ENCODE measurements at regions of chr17 and their contacts with region 1.

Region 1: DNA sequence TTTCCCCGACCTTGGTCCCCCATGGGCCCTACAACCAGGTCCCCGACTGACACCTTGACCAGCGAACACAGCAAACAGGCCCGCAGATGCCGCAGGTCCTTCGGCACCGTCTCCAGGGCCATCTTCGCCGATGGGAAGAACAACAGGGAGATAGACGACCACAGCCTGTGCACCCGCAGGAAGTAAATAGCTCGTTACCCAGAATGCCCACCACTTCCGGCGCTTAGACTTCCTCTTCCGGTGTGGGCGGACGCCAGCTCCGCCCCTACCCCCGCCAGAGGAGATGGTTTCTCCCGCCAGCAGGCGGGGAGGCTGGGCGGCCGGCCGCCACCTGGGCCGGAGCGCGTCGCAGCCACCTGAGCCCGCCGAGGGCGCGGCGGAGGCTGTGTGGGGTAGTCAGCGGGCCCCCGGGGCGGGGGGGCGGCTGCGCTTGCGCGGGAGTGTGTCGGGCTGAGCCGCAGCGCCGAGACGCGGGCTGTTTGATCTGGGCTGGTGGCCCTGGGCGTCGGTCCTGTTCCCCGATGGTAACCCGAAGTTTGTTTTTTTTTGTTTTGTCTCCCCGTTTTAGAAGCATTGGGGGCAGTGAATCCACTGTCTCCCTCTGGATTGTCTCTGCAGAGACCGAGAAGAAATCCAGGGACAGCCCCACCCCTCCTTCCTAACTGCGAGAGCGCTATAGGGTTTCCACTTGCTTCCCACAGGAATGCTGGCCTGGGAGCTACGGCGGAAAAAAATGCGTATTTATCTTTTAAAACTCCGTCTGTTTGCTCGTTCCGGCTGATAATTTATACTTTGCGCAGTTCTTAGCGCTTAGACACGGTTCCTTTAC is at the start of gene SUPT4H1:
- DNase-seq: peak; percentile 91 to 96 (median 94)
- ATAC-seq: peak; percentile 98
- H3K4me3 ChIP-seq: peak within 1 kb of the TSS; percentile 40
- H3K4me1 ChIP-seq: peaks cover 13% of the 10 kb centered on the region
- CTCF ChIP-seq: no peak
- total RNA-seq, gene SUPT4H1: 57.9 to 79.5 (median 68.9) TPM

Region 2: DNA sequence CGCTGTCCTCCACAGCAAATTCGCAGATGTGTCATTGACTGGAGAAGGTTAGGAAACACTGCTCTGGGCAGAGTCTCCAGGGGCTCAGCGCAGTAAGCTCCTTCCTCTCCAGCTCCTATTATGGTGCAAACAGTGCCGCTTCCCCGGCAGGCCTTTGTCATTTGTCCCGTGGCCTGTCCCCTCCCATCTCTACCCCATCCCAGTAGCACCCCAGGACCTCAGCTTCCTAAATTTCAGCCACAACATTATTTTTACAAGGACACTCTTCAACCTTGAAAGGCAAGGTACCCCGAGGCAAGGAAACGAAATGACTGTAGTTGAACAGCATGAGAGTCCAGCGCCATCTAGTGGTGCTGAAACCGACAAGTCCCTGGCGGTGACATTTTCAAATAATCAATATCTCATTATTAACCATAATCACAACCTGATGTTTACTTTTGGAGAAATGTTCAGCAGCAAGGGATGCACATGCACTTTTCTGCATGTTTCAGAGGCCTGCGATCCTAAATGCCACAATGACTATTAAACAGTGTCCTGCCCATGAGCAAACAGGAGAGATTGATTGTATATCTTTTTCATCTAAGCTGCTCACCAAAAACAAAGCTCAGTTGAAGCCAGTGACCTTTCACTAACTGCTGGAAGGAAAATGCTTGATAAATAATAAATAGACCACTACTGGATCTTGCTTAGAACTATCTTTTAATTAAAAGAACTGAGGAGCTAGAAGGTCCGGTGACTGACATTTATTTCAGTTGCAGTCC is 518.9 kb before region 1 on chr17:
- intact Hi-C with region 1: no loop called
- DNase-seq: peak in 2 of 3 donors; percentile 44 to 84
- ATAC-seq: peak; percentile 76
- H3K4me3 ChIP-seq: no peak overlapping the region
- H3K4me1 ChIP-seq: no peaks in the 10 kb centered on the region
- CTCF ChIP-seq: peak; percentile 63

Region 3: GRCh38 chr17:58402047-58402446 is 49.8 kb after region 1 on chr17:
- intact Hi-C with region 1: no loop called
- DNase-seq: no peak
- ATAC-seq: no peak
- H3K4me3 ChIP-seq: no peak overlapping the region
- H3K4me1 ChIP-seq: peaks cover 10% of the 10 kb centered on the region
- CTCF ChIP-seq: no peak

Region 4: DNA sequence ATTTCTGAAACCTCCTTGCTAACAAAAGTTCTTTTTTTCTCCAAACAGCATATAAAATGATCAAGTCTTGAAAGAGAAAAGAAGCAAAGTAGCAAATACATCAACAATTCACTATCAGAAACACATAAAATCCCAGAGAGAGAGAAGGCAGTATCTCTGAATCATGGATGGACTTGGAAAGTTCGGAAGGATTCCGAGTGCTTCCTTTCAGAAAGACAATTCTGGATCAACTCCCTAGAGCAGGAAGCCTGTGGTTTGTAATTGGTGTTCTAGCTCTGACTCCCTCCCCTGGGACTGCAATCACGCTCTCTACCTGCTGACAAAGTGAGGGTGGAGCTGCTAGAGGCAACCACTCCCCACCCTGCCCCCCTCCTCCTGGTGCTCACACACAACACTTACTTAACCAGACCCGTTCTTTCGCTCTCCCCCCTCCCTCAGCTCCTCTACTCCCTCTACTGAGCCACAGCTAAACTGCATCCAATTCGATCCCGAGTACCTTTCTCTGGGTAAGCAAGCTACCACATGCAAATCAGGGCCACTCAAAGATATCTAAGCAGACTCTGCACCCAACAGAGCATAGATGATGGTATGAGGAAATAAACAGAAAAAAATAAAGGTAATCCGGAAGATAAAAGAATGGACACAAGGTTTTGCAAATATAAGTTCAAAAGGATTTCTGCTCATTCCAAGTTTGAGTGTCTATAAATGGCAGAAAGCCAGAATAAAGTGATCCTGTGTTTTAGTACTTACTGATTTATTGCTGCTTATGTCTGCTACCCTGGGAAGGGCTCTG is 65.3 kb after region 1 on chr17 and contains the start of gene RNF43:
- intact Hi-C with region 1: loop called in 1 of 2 experiments (anchors 10 kb)
- DNase-seq: peak; percentile 90 to 99 (median 95)
- ATAC-seq: peak; percentile 97
- H3K4me3 ChIP-seq: peak within 1 kb of the TSS; percentile 25
- H3K4me1 ChIP-seq: peaks cover 5% of the 10 kb centered on the region
- CTCF ChIP-seq: peak; percentile 64
- total RNA-seq, gene RNF43: 24.2 to 68.5 (median 37.7) TPM

Measured in mucosa of descending colon (tissue), 3 donors.